ENCODE measurements at regions of chr9 and their contacts with region 1.

Region 1: GRCh38 chr9:73154760-73155159 is 3.1 kb downstream of the ANXA1 start:
- DNase-seq: peak in 3 of 9 experiments; percentile 20 to 74 (median 55)
- ATAC-seq: peak; percentile 43
- H3K4me3 ChIP-seq: peak overlapping the region; percentile 39 to 64
- H3K4me3 Mint-ChIP-seq: peak overlapping the region; percentile 89
- H3K27ac ChIP-seq: peak overlapping the region; percentile 63 to 83
- H3K27ac Mint-ChIP-seq: peak overlapping the region; percentile 93
- H3K4me1 ChIP-seq: peaks cover 76% of the 10 kb centered on the region
- H3K4me1 Mint-ChIP-seq: peaks cover 76% of the 10 kb centered on the region
- H3K27me3 ChIP-seq: no peaks in the 10 kb centered on the region
- H3K27me3 Mint-ChIP-seq: no peaks in the 10 kb centered on the region
- CTCF ChIP-seq: no peak

Region 2: GRCh38 chr9:73143606-73144328 is 11.0 kb before region 1 on chr9:
- CTCF ChIA-PET with region 1: interaction called, 3 read pairs
- POLR2A ChIA-PET with region 1: interaction called, 10 read pairs
- intact Hi-C with region 1: no loop called
- DNase-seq: no peak
- ATAC-seq: no peak
- H3K4me3 ChIP-seq: no peak overlapping the region
- H3K4me3 Mint-ChIP-seq: no peak overlapping the region
- H3K27ac ChIP-seq: no peak overlapping the region
- H3K27ac Mint-ChIP-seq: no peak overlapping the region
- H3K4me1 ChIP-seq: peaks cover 3% of the 10 kb centered on the region
- H3K4me1 Mint-ChIP-seq: peaks cover 12% of the 10 kb centered on the region
- H3K27me3 ChIP-seq: no peaks in the 10 kb centered on the region
- H3K27me3 Mint-ChIP-seq: no peaks in the 10 kb centered on the region
- CTCF ChIP-seq: no peak

Measured in CD8-positive, alpha-beta T cell (primary cell).